ENCODE measurements at regions of chr7 and their contacts with region 1.

Region 1: GRCh38 chr7:87574630-87575029 is 26.1 kb downstream of the ABCB1 start:
- DNase-seq: peak; percentile 30
- H3K4me3 Mint-ChIP-seq: no peak overlapping the region
- H3K27ac Mint-ChIP-seq: no peak overlapping the region
- H3K4me1 Mint-ChIP-seq: peaks cover 14% of the 10 kb centered on the region
- H3K27me3 Mint-ChIP-seq: no peaks in the 10 kb centered on the region

Region 2: GRCh38 chr7:87552351-87552900 is 22.2 kb before region 1 on chr7:
- CTCF ChIA-PET with region 1: no interaction called
- intact Hi-C with region 1: no loop called
- DNase-seq: no peak
- H3K4me3 Mint-ChIP-seq: no peak overlapping the region
- H3K27ac Mint-ChIP-seq: no peak overlapping the region
- H3K4me1 Mint-ChIP-seq: no peaks in the 10 kb centered on the region
- H3K27me3 Mint-ChIP-seq: no peaks in the 10 kb centered on the region

Region 3: DNA sequence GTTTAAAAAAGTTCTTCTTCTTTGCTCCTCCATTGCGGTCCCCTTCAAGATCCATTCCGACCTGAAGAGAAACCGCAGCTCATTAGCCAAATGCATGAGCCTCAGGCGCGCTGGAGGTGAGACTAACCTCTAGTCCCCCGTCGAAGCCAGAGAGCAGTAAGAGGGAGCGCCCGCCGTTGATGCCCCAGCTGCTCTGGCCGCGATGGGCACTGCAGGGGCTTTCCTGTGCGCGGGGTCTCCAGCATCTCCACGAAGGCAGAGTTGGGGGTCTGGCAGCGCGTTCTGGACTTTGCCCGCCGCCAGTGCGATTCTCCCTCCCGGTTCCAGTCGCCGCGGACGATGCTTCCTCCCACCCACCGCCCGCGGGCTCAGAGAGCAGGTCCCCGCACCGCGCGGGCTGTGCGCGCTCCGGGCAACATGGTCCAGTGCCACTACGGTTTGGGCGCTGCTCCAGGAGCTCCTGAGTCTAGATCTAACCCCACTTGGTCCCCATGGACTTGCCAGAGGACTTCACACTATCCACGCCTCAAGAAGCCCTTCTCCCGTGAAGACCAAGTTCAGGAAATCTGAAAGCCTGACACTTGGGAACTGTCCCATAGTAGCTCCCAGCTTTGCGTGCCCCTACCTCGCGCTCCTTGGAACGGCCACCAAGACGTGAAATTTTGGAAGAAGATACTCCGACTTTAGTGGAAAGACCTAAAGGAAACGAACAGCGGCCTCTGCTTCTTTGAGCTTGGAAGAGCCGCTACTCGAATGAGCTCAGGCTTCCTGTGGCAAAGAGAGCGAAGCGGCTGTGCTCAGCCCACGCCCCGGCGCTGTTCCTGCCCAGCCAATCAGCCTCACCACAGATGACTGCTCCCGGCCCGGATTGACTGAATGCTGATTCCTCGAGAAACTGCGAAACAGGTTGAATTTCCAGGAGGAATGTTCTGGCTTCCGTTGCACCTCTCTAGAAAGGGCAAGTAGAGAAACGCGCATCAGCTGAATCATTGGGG is 25.8 kb after region 1 on chr7 and contains the start of gene ABCB1:
- CTCF ChIA-PET with region 1: interaction called, 4 read pairs
- intact Hi-C with region 1: loop called (anchors 2 kb)
- DNase-seq: peak; percentile 73
- H3K4me3 Mint-ChIP-seq: peak within 1 kb of the TSS; percentile 84
- H3K27ac Mint-ChIP-seq: peak within 1 kb of the TSS; percentile 8
- H3K4me1 Mint-ChIP-seq: peaks cover 20% of the 10 kb centered on the region
- H3K27me3 Mint-ChIP-seq: peaks cover 5% of the 10 kb centered on the region
- total RNA-seq, gene ABCB1: 2.3 to 3.5 TPM

Measured in activated naive CD4-positive, alpha-beta T cell treated with anti-CD3 and anti-CD28 coated beads for 36 hours (primary cell).